ENCODE measurements at regions of chr4 and their contacts with region 1.

Region 1: GRCh38 chr4:159487284-159487747 is 384.4 kb downstream of the RAPGEF2 start:
- DNase-seq: peak; percentile 43
- H3K4me3 ChIP-seq: no peak overlapping the region
- H3K27ac ChIP-seq: no peak overlapping the region
- H3K4me1 ChIP-seq: peaks cover 14% of the 10 kb centered on the region
- H3K27me3 ChIP-seq: no peaks in the 10 kb centered on the region
- CTCF ChIP-seq: peak; percentile 80

Region 2: GRCh38 chr4:159334461-159334860 is 152.9 kb before region 1 on chr4:
- CTCF ChIA-PET with region 1: no interaction called
- POLR2A ChIA-PET with region 1: no interaction called
- intact Hi-C with region 1: no loop called
- DNase-seq: no peak
- H3K4me3 ChIP-seq: no peak overlapping the region
- H3K27ac ChIP-seq: no peak overlapping the region
- H3K4me1 ChIP-seq: no peaks in the 10 kb centered on the region
- H3K27me3 ChIP-seq: no peaks in the 10 kb centered on the region
- CTCF ChIP-seq: no peak

Region 3: DNA sequence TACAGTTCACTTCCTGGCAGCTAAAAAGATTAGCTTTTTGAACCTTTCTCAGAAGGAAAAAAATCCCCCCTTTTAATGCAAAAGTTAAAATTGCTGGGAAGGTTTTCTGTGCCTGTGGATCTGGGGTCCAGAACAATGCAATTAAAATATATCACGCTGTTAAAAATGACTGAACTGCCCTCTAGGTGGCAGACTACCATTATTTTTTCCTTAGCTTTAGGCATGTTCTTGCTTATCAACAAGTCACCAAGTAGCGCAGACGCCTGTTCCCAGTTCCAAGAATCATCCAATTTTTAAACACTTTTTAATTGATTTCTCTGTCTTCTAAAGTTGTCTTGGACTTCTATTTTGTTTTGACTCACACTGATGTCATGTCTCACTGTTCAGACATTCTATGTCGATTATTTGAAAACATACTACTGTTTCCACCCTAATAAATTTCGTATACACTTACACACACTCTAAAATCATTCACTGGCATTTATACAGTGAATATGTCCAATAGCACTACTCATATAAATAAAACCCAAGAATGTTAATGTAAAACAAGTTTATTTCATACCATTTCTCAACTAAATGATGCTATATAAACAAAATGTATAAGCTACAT is 277.1 kb after region 1 on chr4:
- CTCF ChIA-PET with region 1: no interaction called
- POLR2A ChIA-PET with region 1: no interaction called
- intact Hi-C with region 1: loop called (anchors 10 kb)
- DNase-seq: peak in 1 of 2 experiments; percentile 11
- H3K4me3 ChIP-seq: no peak overlapping the region
- H3K27ac ChIP-seq: no peak overlapping the region
- H3K4me1 ChIP-seq: no peaks in the 10 kb centered on the region
- H3K27me3 ChIP-seq: no peaks in the 10 kb centered on the region
- CTCF ChIP-seq: peak; percentile 72

Region 4: GRCh38 chr4:159946983-159947615 is 459.8 kb after region 1 on chr4:
- CTCF ChIA-PET with region 1: no interaction called
- POLR2A ChIA-PET with region 1: no interaction called
- intact Hi-C with region 1: loop called (anchors 10 kb)
- DNase-seq: peak in 1 of 2 experiments; percentile 35
- H3K4me3 ChIP-seq: no peak overlapping the region
- H3K27ac ChIP-seq: no peak overlapping the region
- H3K4me1 ChIP-seq: no peaks in the 10 kb centered on the region
- H3K27me3 ChIP-seq: no peaks in the 10 kb centered on the region
- CTCF ChIP-seq: peak; percentile 77

Region 5: DNA sequence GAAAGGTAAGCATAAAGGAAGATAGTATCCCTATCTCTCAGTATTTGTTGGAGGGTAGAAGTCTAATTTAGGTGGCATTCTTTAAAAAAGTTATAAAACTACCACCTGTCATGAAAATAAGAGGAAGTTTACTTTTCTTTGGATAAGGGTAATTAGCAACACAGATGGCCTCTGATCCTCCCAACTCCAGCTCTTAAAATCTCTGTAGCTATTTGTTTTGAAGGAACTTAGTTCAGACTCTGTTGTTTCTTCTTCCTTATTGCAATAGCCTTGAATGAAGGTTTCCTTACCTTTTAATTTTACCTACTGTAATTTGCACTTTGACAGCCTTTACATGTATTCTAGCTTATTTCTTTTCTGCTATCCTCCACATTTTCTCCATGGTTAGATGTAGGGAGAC is 876.9 kb after region 1 on chr4:
- CTCF ChIA-PET with region 1: no interaction called
- POLR2A ChIA-PET with region 1: no interaction called
- intact Hi-C with region 1: loop called (anchors 10 kb)
- DNase-seq: no peak
- H3K4me3 ChIP-seq: no peak overlapping the region
- H3K27ac ChIP-seq: no peak overlapping the region
- H3K4me1 ChIP-seq: peaks cover 17% of the 10 kb centered on the region
- H3K27me3 ChIP-seq: no peaks in the 10 kb centered on the region
- CTCF ChIP-seq: no peak

Measured in PC-9 (cell line).